Stomach (tissue), 19 donors: ENCODE measurements at regions of chr3 and their contacts with region 1.

Region 1: GRCh38 chr3:146326670-146327543 is 76.0 kb upstream of the PLSCR4 start:
- DNase-seq: peak; percentile 47 to 80
- H3K4me3 ChIP-seq: no peak overlapping the region
- H3K27ac ChIP-seq: no peak overlapping the region
- H3K4me1 ChIP-seq: peaks cover 0 to 3% (median 0%) of the 10 kb centered on the region in 4 donors
- H3K27me3 ChIP-seq: no peaks in the 10 kb centered on the region
- CTCF ChIP-seq: peak in 4 of 7 experiments; percentile 16 to 66 (median 40)
- EP300 ChIP-seq: no peak
- POLR2A ChIP-seq: no peak

Region 2: GRCh38 chr3:146065573-146066006 is 261.3 kb before region 1 on chr3:
- intact Hi-C with region 1: loop called (anchors 10 kb)
- DNase-seq: peak in 1 of 2 donors; percentile 84
- H3K4me3 ChIP-seq: no peak overlapping the region
- H3K27ac ChIP-seq: no peak overlapping the region
- H3K4me1 ChIP-seq: peaks cover 0 to 12% (median 6%) of the 10 kb centered on the region in 4 donors
- H3K27me3 ChIP-seq: no peaks in the 10 kb centered on the region
- CTCF ChIP-seq: peak in 4 of 7 experiments; percentile 45 to 74 (median 60)
- EP300 ChIP-seq: no peak
- POLR2A ChIP-seq: no peak

Region 3: GRCh38 chr3:146222204-146223046 is 104.5 kb before region 1 on chr3:
- intact Hi-C with region 1: loop called (anchors 5 kb)
- DNase-seq: peak in 1 of 2 donors; percentile 53
- H3K4me3 ChIP-seq: no peak overlapping the region
- H3K27ac ChIP-seq: peak overlapping the region in 3 of 5 donors; percentile 29 to 58 (median 40)
- H3K4me1 ChIP-seq: peaks cover 0 to 51% (median 22%) of the 10 kb centered on the region in 4 donors
- H3K27me3 ChIP-seq: no peaks in the 10 kb centered on the region
- CTCF ChIP-seq: no peak
- EP300 ChIP-seq: no peak
- POLR2A ChIP-seq: no peak